K562 (cell line): ENCODE measurements at regions of chr19 and their contacts with region 1.

Region 1: GRCh38 chr19:5707576-5708575 is 12.1 kb downstream of the LONP1 start:
- DNase-seq: peak in 2 of 4 experiments; percentile 29 to 38
- ATAC-seq: peak; percentile 9
- H3K4me3 ChIP-seq: no peak overlapping the region
- H3K27ac ChIP-seq: no peak overlapping the region
- H3K4me1 ChIP-seq: peaks cover 0 to 28% of the 10 kb centered on the region in 2 experiments; a peak in 2 of 5 replicates
- H3K27me3 ChIP-seq: no peaks in the 10 kb centered on the region
- CTCF ChIP-seq: no peak
- EP300 ChIP-seq: no peak
- POLR2A ChIP-seq: 0 out of 2 replicates have a peak, but pooled peaks have one; percentile 19
- RAD21 ChIP-seq: no peak

Region 2: GRCh38 chr19:5697022-5697889 is 10.6 kb before region 1 on chr19:
- CTCF ChIA-PET with region 1: no interaction called
- POLR2A ChIA-PET with region 1: interaction called, 34 read pairs
- in situ Hi-C with region 1: no loop called
- intact Hi-C with region 1: no loop called
- DNase-seq: no peak
- ATAC-seq: no peak
- H3K4me3 ChIP-seq: no peak overlapping the region
- H3K27ac ChIP-seq: no peak overlapping the region
- H3K4me1 ChIP-seq: peaks cover 7 to 66% of the 10 kb centered on the region in 2 experiments
- H3K27me3 ChIP-seq: no peaks in the 10 kb centered on the region
- CTCF ChIP-seq: no peak
- EP300 ChIP-seq: no peak
- POLR2A ChIP-seq: peak; percentile 52
- RAD21 ChIP-seq: no peak

Region 3: DNA sequence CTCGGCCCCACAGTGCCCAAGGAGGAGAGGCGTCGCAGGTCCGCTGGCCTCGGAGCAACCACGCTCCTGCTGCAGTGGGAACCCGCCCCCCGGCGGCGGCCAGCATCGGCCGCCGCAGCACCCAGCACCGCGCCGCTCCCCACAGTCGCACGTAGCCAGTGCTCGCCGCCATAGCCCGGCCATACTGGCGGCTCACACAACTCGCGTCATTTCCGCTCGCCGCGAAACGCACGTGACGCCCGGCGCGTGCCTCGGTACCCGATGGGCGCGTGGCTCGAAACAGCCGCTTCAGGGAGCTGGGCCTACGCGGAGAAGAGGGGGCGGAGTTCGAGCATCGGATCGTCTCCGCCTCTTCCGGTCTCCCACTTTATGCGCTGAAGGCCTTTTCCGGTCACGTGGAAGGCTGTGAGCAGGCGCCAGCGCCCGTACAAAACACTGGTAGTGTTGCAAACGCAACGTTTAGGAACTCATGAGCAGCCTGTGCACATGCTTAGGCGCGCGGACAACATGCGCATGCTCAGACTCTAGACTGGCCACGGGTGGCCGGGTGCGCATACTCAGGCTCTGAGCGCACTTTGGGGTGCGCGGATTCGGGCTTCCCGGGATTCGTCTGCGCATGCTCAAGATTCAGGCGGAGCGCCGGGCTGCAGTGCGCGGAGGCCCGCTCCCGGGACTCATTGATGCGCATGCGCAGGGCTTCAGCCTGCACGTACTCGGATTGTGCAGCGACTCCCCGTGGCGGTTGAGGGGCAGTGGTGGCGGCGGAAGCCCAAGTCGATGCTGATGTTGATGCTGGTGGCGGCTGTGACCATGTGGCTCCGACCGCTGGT is 12.3 kb after region 1 on chr19 and contains the starts of genes CATSPERD and LONP1:
- CTCF ChIA-PET with region 1: no interaction called
- POLR2A ChIA-PET with region 1: interaction called, 30 read pairs
- in situ Hi-C with region 1: no loop called
- intact Hi-C with region 1: no loop called
- DNase-seq: peak; percentile 99
- ATAC-seq: peak; percentile 91
- H3K4me3 ChIP-seq: peak within 1 kb of the TSS; percentile 98
- H3K27ac ChIP-seq: peak within 1 kb of the TSS; percentile 99
- H3K4me1 ChIP-seq: peaks cover 13 to 28% of the 10 kb centered on the region in 2 experiments; a peak in 4 of 5 replicates
- H3K27me3 ChIP-seq: no peaks in the 10 kb centered on the region
- CTCF ChIP-seq: peak; percentile 92 to 96 (median 93)
- EP300 ChIP-seq: peak; percentile 65; the same call in 1 of the 2 replicates
- POLR2A ChIP-seq: peak; percentile 87
- RAD21 ChIP-seq: peak; percentile 41 to 56
- polyA plus RNA-seq, gene CATSPERD: not detected
- polyA plus RNA-seq, gene LONP1: 1.1 to 3.7 TPM

Region 4: DNA sequence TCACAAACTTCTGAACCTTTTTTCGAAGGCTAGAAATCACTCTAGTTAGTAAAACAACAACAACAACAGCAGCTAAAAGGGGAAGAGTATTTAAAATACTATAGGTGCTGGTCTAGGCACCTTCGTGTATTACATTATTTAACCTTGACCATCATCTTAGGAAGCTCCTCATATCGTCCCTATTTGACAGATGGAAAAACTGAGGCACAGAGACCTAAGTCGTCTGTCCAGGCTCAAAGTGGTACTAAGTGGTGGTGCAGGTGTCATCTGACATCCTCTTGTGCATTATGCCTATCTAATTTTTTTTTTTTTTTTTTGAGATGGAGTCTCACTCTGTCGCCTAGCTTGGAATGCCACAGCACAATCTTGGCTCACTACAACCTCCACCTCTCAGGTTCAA is 41.6 kb after region 1 on chr19:
- CTCF ChIA-PET with region 1: no interaction called
- POLR2A ChIA-PET with region 1: no interaction called
- in situ Hi-C with region 1: no loop called
- intact Hi-C with region 1: no loop called
- DNase-seq: no peak
- ATAC-seq: no peak
- H3K4me3 ChIP-seq: no peak overlapping the region
- H3K27ac ChIP-seq: no peak overlapping the region
- H3K4me1 ChIP-seq: no peaks in the 10 kb centered on the region; a peak in 1 of 5 replicates
- H3K27me3 ChIP-seq: peaks cover 22 to 36% of the 10 kb centered on the region in 2 experiments; a peak in 3 of 5 replicates
- CTCF ChIP-seq: no peak
- EP300 ChIP-seq: no peak
- POLR2A ChIP-seq: no peak
- RAD21 ChIP-seq: no peak